Activated naive CD4-positive, alpha-beta T cell treated with anti-CD3 and anti-CD28 coated beads for 36 hours (primary cell): ENCODE measurements at regions of chr10 and their contacts with region 1.

Region 1: GRCh38 chr10:104231784-104232612 is at the start of gene CFAP43:
- DNase-seq: peak; percentile 99
- H3K4me3 Mint-ChIP-seq: peak within 1 kb of the TSS; percentile 87
- H3K27ac Mint-ChIP-seq: peak within 1 kb of the TSS; percentile 50
- H3K4me1 Mint-ChIP-seq: peaks cover 6% of the 10 kb centered on the region
- H3K27me3 Mint-ChIP-seq: peaks cover 8% of the 10 kb centered on the region
- total RNA-seq, gene CFAP43: not detected

Region 2: DNA sequence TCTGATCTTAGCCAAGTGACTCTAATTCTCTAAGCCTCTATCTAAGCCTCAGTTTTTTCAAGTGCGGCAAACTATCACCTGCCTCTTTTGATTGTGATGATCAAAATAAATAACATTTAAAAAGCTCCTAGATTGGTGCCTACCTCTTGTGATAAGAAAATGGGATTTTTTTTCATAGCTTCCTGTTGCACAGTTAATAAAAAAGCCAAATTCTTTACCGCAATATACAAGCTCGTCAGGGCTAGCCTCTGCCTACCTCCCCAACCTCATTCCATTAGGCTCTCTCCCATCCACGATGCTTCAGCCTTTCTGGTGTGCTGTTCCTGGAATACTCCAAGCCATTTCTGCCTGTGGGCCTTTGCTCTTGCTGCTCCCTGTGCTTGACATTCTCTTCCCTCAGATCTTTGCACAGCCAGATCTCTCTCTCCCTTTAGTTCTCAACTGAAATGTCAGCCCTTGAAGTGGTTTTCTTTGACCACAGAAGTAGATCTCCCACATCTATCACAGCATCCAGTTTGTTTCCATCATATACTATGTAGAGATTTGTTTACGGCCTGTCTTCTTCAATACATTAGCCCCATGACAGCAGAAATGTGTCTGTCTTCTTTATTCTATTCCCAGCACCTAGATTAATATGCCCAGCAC is 61.3 kb before region 1 on chr10:
- CTCF ChIA-PET with region 1: no interaction called
- intact Hi-C with region 1: no loop called
- DNase-seq: no peak
- H3K4me3 Mint-ChIP-seq: no peak overlapping the region
- H3K27ac Mint-ChIP-seq: no peak overlapping the region
- H3K4me1 Mint-ChIP-seq: peaks cover 17% of the 10 kb centered on the region
- H3K27me3 Mint-ChIP-seq: peaks cover 2% of the 10 kb centered on the region

Region 3: GRCh38 chr10:104254493-104255310 is 22.7 kb after region 1 on chr10 and contains the start of gene GSTO1:
- CTCF ChIA-PET with region 1: no interaction called
- intact Hi-C with region 1: loop called (anchors 1 kb)
- DNase-seq: peak; percentile 72
- H3K4me3 Mint-ChIP-seq: peak within 1 kb of the TSS; percentile 99
- H3K27ac Mint-ChIP-seq: peak within 1 kb of the TSS; percentile 99
- H3K4me1 Mint-ChIP-seq: peaks cover 52% of the 10 kb centered on the region
- H3K27me3 Mint-ChIP-seq: peaks cover 4% of the 10 kb centered on the region
- total RNA-seq, gene GSTO1: 197 to 201 TPM

Region 4: DNA sequence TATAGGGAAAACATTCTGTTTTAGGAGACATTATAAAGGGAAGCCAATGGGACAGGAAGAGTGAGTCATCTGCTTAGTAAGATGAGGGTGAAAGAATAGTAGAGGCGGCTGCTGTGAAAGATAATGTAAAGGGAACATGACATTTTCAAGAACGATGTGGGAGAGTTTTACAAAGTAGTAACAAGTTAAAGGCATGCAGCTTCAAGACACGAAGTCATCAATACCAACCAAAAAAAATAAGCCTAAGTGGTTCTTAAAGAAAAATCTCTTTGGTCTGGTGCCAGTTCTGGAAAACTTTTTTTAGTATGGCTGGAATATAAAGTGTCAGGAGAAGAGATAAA is 28.7 kb after region 1 on chr10:
- CTCF ChIA-PET with region 1: no interaction called
- intact Hi-C with region 1: loop called (anchors 1 kb)
- DNase-seq: no peak
- H3K4me3 Mint-ChIP-seq: peak overlapping the region; percentile 55
- H3K27ac Mint-ChIP-seq: peak overlapping the region; percentile 96
- H3K4me1 Mint-ChIP-seq: peaks cover 85% of the 10 kb centered on the region
- H3K27me3 Mint-ChIP-seq: no peaks in the 10 kb centered on the region

Region 5: GRCh38 chr10:104328896-104329710 is 97.1 kb after region 1 on chr10:
- CTCF ChIA-PET with region 1: no interaction called
- intact Hi-C with region 1: loop called (anchors 1 kb)
- DNase-seq: peak; percentile 94
- H3K4me3 Mint-ChIP-seq: peak overlapping the region; percentile 72
- H3K27ac Mint-ChIP-seq: peak overlapping the region; percentile 96
- H3K4me1 Mint-ChIP-seq: peaks cover 98% of the 10 kb centered on the region
- H3K27me3 Mint-ChIP-seq: no peaks in the 10 kb centered on the region